Endothelial cell of umbilical vein (primary cell): ENCODE measurements at regions of chr2 and their contacts with region 1.

Region 1: DNA sequence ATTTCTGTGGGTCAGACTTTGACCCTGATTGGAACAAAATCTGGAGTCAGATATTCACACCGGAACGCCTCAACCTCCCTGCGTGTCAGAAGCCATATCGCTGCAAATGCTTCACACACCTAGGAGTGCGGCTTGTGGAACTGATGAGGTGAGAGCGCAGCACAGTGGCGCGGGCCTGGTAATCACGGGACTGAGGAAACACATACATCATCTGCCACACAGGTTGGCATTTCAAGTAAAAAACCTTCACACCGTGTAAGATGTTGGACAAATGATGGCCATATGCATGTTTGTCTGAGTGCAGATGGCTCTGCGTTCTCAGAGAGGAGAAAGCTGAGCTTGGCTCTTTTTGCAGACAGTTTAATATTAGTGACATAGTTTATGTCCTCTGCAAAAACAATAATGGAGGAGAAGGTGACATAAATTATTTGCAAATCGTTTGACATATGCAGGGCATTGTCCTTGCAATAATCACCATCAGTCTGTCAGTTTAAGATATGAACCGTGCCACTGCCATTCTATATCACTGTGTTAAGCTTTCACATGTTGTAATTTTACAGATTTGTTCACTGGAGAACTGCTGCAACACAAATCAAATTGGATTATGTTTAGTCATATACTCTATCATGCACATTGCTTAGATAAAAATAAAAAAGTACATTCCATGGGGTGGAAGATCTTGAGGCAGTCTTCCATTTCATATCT is 101.4 kb downstream of the MTX2 start:
- DNase-seq: no peak
- H3K4me3 ChIP-seq: no peak overlapping the region
- H3K27ac ChIP-seq: no peak overlapping the region
- H3K4me1 ChIP-seq: no peaks in the 10 kb centered on the region
- H3K27me3 ChIP-seq: no peaks in the 10 kb centered on the region
- CTCF ChIP-seq: no peak
- POLR2A ChIP-seq: no peak

Region 2: DNA sequence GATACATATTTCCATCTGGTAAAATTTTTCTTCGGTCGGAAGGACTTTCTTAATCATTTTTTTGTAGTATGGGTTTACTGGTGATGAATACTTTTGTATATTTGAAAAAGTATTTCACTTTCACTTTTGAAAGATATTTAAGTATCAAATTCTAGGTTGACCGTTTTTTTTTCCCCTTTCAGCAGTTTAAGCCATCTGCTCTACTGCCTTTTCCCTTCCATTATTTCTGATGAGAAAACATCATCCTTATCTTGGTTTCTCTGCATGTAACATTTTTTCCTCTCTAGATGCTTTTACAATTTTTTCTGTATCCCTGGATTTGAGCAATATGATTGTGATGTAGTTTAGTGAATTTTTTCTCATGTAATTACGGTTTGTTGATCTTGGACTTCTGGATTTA is 14.4 kb before region 1 on chr2:
- CTCF ChIA-PET with region 1: no interaction called
- POLR2A ChIA-PET with region 1: interaction called, 12 read pairs
- dilution Hi-C with region 1: no loop called
- intact Hi-C with region 1: no loop called
- DNase-seq: peak; percentile 2
- H3K4me3 ChIP-seq: no peak overlapping the region
- H3K27ac ChIP-seq: no peak overlapping the region
- H3K4me1 ChIP-seq: no peaks in the 10 kb centered on the region
- H3K27me3 ChIP-seq: no peaks in the 10 kb centered on the region
- CTCF ChIP-seq: no peak
- POLR2A ChIP-seq: no peak